ENCODE measurements at regions of chr2 and their contacts with region 1.

Region 1: DNA sequence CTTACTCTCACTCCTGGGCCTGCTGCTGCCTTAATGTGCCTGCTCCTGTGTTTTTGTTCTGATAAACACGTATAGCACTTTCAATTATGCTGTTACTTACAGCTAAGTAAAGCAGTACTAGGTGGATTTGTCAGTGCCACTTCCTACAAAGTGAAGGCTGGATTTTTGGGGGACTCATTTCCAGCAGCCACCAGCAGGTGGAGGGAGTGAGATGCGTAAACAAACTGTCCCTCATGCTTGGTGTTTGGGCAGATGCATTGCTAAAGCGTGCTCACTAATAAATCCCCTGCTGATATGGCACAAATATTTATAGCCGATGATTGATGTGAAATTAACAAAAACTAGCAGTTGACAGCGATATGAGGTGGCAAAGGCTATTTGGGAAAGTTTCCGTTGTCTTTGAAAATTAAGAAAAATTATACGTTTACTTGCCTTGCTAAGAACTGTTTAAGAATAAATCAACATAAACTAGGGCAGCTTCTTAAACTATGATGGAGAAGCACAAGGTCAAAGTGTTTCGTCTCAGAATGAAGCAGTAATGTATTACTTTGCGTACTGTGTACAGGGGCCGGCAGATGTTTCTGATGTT is 101.7 kb downstream of the AGAP1 start:
- DNase-seq: peak; percentile 53
- H3K4me3 ChIP-seq: no peak overlapping the region
- H3K27ac ChIP-seq: no peak overlapping the region
- H3K4me1 ChIP-seq: no peaks in the 10 kb centered on the region
- H3K27me3 ChIP-seq: no peaks in the 10 kb centered on the region
- CTCF ChIP-seq: peak; percentile 79 to 82 (median 82)
- POLR2A ChIP-seq: no peak

Region 2: GRCh38 chr2:235135990-235136561 is 459.4 kb before region 1 on chr2:
- intact Hi-C with region 1: loop called (anchors 2 kb)
- DNase-seq: peak; percentile 61
- H3K4me3 ChIP-seq: no peak overlapping the region
- H3K27ac ChIP-seq: no peak overlapping the region
- H3K4me1 ChIP-seq: no peaks in the 10 kb centered on the region
- H3K27me3 ChIP-seq: no peaks in the 10 kb centered on the region
- CTCF ChIP-seq: peak; percentile 50 to 77 (median 68)
- POLR2A ChIP-seq: no peak

Region 3: DNA sequence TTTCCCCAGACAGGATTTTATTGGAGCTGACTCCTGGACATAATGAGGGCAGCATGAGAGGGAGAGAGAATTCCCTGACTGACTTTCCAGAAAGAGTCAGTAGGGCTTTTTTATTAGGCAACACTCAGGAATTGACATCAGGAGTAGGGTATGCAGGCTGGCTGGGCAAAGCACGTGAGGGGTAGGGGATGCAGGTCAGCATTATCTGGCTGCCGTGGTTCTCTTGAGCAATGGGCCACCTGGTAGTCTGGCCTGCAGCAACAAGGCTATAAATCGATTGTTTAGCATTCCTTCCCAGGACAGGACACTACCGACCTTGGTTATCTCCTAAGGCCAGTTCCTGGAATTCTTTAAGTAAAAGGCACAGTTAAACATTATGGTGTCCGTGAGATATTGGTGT is 262.4 kb before region 1 on chr2:
- intact Hi-C with region 1: no loop called
- DNase-seq: no peak
- H3K4me3 ChIP-seq: no peak overlapping the region
- H3K27ac ChIP-seq: no peak overlapping the region
- H3K4me1 ChIP-seq: no peaks in the 10 kb centered on the region
- H3K27me3 ChIP-seq: no peaks in the 10 kb centered on the region
- CTCF ChIP-seq: no peak
- POLR2A ChIP-seq: no peak

Measured in prostate gland (tissue), 2 donors.